Transverse colon (tissue), 4 donors: ENCODE measurements at regions of chr21 and their contacts with region 1.

Region 1: GRCh38 chr21:42258153-42258884 is 39.4 kb downstream of the ABCG1 start:
- DNase-seq: peak; percentile 82
- H3K4me3 ChIP-seq: no peak overlapping the region
- H3K27ac ChIP-seq: no peak overlapping the region
- H3K4me1 ChIP-seq: peaks cover 0 to 28% (median 7%) of the 10 kb centered on the region in 4 donors
- H3K27me3 ChIP-seq: no peaks in the 10 kb centered on the region
- CTCF ChIP-seq: peak; percentile 82 to 93 (median 84)
- EP300 ChIP-seq: no peak
- POLR2A ChIP-seq: no peak

Region 2: DNA sequence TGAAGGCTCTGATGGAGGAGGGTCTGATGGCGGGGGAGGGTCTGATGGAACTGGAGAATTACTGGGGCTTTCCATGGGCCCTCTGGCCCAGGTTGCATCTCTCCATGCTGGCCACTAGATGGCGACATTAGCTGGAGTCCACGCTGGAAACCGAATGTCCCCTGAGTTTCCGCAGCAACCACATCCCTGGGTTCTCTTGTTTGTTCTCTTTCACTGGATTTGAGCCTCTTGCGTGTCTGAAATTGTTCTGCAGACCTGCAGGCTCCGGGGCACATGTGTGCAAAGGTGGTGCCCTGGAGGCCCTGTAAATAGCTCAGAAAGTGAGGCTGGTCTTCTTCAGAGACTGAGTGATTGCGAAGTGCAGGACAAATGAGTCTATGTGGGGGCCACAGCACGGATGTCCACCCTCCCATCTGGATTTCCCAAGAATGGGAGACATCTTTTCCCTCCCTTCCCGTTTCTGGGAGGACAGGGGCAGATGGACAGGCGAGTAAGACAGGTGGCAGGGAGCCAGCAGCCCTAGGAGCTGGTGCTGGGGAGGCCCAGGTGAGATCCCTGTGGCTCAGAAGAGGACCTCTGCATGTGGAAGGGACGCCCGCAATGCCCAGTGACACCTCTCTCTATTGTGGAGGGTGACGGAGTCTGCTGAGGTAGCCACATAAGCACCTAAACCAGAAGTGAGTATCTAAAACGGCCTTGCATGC is 112.6 kb before region 1 on chr21:
- in situ Hi-C with region 1: loop called in 3 of 4 experiments (anchors 5 to 10 kb)
- intact Hi-C with region 1: loop called (anchors 5 kb)
- DNase-seq: peak; percentile 66
- H3K4me3 ChIP-seq: no peak overlapping the region
- H3K27ac ChIP-seq: no peak overlapping the region
- H3K4me1 ChIP-seq: peaks cover 0 to 10% (median 4%) of the 10 kb centered on the region in 4 donors
- H3K27me3 ChIP-seq: no peaks in the 10 kb centered on the region
- CTCF ChIP-seq: peak; percentile 87 to 97 (median 95)
- EP300 ChIP-seq: no peak
- POLR2A ChIP-seq: no peak

Region 3: DNA sequence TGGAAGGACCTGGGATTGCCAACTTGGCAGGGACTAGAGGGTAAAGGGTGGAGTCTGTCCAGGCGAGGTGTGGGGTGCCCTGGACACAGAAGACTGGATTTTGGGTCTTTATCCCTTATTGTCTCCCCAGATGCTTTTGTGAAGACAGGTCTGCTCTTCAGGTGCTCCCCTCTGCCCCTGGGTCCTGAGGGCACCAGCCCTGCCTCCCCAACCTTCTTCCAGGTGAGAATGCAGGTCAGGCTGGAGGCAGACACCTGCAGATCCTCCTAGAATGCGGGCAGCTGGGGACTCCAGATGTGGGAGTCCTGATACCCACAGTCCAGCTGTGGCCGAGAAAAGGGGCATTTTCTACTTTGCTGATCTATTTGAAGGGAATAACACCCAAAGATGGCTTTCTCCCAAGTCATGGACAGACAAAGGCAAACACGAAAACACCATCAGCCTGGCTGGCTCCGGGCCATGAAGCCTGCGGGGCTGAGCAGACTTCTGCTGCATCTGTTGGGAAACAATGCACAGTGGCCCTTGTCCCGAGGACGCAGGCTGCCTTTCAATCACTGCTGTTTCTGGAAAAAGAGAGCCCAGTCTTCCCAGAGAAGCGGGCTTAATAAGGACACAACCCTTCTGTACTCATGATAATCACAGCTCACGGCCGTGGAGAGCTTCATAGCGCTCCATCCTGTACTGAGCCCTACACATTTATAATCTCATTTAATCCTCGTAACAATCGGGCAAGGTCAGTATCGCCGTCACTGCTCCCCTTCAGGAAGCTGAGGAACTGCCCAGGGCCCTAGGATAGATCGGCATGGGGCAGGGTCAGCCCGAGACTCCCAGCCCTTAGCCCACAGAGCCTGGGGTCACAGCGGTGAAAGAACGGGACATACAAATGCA is 101.4 kb before region 1 on chr21:
- in situ Hi-C with region 1: loop called in 1 of 4 experiments (anchors 10 kb)
- intact Hi-C with region 1: loop called (anchors 5 kb)
- DNase-seq: peak; percentile 31
- H3K4me3 ChIP-seq: no peak overlapping the region
- H3K27ac ChIP-seq: no peak overlapping the region
- H3K4me1 ChIP-seq: peaks cover 0 to 5% (median 2%) of the 10 kb centered on the region in 4 donors
- H3K27me3 ChIP-seq: no peaks in the 10 kb centered on the region
- CTCF ChIP-seq: no peak
- EP300 ChIP-seq: no peak
- POLR2A ChIP-seq: no peak

Region 4: GRCh38 chr21:42164064-42164789 is 94.1 kb before region 1 on chr21:
- in situ Hi-C with region 1: loop called in 1 of 4 experiments (anchors 10 kb)
- intact Hi-C with region 1: loop called (anchors 5 kb)
- DNase-seq: peak; percentile 83
- H3K4me3 ChIP-seq: no peak overlapping the region
- H3K27ac ChIP-seq: peak overlapping the region; percentile 61 to 80 (median 74)
- H3K4me1 ChIP-seq: peaks cover 0 to 23% (median 10%) of the 10 kb centered on the region in 4 donors
- H3K27me3 ChIP-seq: no peaks in the 10 kb centered on the region
- CTCF ChIP-seq: peak; percentile 47 to 81 (median 57)
- EP300 ChIP-seq: no peak
- POLR2A ChIP-seq: no peak

Region 5: DNA sequence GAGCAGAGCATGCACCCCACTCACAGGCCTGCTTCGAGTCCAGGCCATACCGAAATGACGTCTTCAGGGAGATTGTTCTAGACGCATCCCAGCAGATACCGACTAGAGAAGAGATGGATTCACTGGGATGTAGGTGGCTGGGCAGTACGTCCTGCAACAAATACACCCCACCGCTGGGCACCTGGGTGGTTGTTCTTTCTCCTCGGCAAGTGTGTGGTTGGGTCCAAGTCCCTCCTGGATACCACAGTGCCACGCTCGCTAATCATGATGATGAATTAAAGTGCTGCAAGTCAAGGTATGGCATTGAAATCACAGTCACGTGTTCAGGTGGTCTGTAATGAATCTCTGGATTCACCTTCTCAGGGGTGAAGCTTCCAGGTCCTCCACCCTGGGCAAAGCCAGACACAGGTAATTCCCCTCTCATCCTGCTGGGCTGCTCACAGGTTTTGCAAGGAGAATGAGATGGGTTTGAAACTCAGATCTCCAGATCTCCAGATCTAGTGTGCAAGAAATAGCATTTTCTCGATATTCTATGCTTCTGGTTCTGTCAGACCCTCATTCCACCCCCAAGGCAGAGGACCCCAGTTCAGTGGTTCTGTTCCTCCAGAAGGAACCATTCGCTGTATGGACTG is 191.1 kb after region 1 on chr21:
- in situ Hi-C with region 1: no loop called
- intact Hi-C with region 1: no loop called
- DNase-seq: no peak
- H3K4me3 ChIP-seq: no peak overlapping the region
- H3K27ac ChIP-seq: no peak overlapping the region
- H3K4me1 ChIP-seq: peaks cover 0 to 11% (median 5%) of the 10 kb centered on the region in 4 donors
- H3K27me3 ChIP-seq: no peaks in the 10 kb centered on the region
- CTCF ChIP-seq: no peak
- EP300 ChIP-seq: no peak
- POLR2A ChIP-seq: no peak

Region 6: DNA sequence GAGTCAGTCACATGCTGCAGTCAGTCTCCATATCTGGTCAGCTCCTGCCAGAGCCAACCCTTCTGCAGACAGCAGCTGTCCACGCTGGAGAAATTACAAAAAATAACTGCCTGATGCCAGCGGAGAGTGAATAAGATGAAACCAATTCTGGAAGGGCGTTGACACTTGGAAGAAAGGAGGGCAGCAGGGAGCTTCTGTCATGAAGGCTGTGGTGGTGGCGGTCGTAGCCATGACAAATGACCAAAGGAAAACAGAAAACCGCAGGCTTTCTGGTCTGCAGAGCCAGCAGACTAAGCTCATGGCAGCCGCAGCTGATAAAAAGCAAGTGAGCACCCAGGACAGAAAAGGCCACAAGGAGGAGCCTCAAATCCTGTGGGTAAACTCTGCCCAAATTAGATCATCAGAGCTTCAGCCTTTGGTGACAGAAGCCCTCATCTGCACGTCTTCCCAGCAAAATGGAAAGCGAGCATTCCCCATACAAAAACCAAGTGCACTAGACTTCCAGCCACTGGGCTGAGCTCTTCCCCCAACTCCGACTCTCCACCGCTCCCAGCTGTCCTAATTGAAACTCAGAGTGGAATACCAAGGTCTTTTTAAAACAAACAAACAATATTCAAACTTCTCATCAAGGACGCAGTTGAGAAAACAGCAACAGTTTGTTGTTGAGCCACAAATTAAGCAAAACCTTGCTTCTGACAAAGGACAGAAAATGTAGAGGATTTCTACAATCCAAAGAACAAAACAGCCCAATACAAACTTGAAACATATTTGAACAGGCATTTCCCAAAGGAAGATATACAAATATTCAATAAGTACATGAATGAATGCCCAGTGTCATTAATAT is 209.0 kb after region 1 on chr21:
- in situ Hi-C with region 1: no loop called
- intact Hi-C with region 1: no loop called
- DNase-seq: peak; percentile 41
- H3K4me3 ChIP-seq: no peak overlapping the region
- H3K27ac ChIP-seq: peak overlapping the region; percentile 68 to 80 (median 78)
- H3K4me1 ChIP-seq: peaks cover 23 to 76% (median 49%) of the 10 kb centered on the region in 4 donors
- H3K27me3 ChIP-seq: no peaks in the 10 kb centered on the region
- CTCF ChIP-seq: peak in 4 of 5 experiments; percentile 6 to 20 (median 12)
- EP300 ChIP-seq: no peak
- POLR2A ChIP-seq: no peak